Gastrocnemius medialis (tissue), 4 donors: ENCODE measurements at regions of chr7 and their contacts with region 1.

Region 1: GRCh38 chr7:50502001-50502684 is 52.0 kb upstream of the FIGNL1 start:
- DNase-seq: peak; percentile 91 to 97
- ATAC-seq: peak; percentile 83 to 88
- H3K4me3 ChIP-seq: peak overlapping the region in 1 of 4 donors; percentile 45
- H3K27ac ChIP-seq: peak overlapping the region; percentile 90 to 99 (median 97)
- H3K4me1 ChIP-seq: peaks cover 53 to 61% of the 10 kb centered on the region in 2 donors
- H3K27me3 ChIP-seq: no peaks in the 10 kb centered on the region
- CTCF ChIP-seq: peak in 1 of 5 experiments; percentile 4
- POLR2A ChIP-seq: peak in 1 of 2 donors; percentile 63

Region 2: DNA sequence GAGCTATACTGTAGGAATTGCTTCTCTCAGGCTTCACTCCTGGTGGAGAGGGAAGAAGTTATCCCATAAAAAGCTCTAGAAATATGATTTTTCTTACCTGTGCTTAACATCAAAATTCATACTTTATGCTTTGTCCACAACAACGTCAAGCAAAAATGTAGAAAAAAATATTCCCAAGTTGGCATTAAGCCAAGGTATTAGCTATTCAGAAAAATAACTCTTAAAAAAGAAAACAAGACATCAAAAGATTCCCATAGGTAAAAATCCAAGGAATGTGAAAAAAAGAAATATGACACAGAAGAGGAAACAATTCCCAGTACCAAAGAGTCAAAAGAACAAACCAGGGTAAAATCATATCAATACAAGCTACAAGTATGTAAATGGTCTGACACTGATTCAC is 1040.3 kb before region 1 on chr7:
- in situ Hi-C with region 1: no loop called
- intact Hi-C with region 1: no loop called
- DNase-seq: no peak
- ATAC-seq: no peak
- H3K4me3 ChIP-seq: no peak overlapping the region
- H3K27ac ChIP-seq: no peak overlapping the region
- H3K4me1 ChIP-seq: no peaks in the 10 kb centered on the region
- H3K27me3 ChIP-seq: no peaks in the 10 kb centered on the region
- CTCF ChIP-seq: no peak
- POLR2A ChIP-seq: no peak

Region 3: DNA sequence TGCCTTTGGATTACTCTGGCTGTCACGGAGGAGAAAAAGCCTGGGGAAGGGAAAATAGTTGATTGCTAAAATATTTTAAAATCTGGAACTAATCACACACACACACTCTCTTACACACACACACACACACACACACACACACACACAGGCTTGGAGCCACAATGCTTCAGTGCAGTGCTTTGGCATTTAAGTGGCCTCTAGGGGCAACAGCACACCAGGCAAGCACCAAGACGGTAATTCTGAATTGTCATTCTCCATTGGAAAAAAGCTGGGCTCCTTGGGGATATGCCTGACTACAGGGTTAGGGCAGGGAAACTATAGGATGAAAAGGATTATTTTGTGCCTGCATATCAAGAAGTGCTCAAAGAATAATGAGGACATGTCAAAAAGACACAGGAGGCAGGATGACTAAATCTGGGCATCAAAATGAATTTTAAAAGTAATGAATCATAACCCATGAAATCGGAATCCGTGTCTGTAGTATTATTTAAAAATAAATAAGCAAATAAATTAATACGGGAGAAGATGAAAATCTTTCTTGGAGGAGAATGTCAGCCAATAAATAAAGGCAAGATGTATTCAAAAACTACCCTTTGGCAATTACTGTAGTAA is 93.5 kb after region 1 on chr7:
- in situ Hi-C with region 1: no loop called
- intact Hi-C with region 1: loop called (anchors 5 kb)
- DNase-seq: peak in 1 of 2 donors; percentile 65
- ATAC-seq: peak; percentile 46 to 89
- H3K4me3 ChIP-seq: no peak overlapping the region
- H3K27ac ChIP-seq: peak overlapping the region in 3 of 4 donors; percentile 5 to 48 (median 31)
- H3K4me1 ChIP-seq: peaks cover 17 to 25% of the 10 kb centered on the region in 2 donors
- H3K27me3 ChIP-seq: no peaks in the 10 kb centered on the region
- CTCF ChIP-seq: peak; percentile 44 to 64 (median 49)
- POLR2A ChIP-seq: no peak

Region 4: DNA sequence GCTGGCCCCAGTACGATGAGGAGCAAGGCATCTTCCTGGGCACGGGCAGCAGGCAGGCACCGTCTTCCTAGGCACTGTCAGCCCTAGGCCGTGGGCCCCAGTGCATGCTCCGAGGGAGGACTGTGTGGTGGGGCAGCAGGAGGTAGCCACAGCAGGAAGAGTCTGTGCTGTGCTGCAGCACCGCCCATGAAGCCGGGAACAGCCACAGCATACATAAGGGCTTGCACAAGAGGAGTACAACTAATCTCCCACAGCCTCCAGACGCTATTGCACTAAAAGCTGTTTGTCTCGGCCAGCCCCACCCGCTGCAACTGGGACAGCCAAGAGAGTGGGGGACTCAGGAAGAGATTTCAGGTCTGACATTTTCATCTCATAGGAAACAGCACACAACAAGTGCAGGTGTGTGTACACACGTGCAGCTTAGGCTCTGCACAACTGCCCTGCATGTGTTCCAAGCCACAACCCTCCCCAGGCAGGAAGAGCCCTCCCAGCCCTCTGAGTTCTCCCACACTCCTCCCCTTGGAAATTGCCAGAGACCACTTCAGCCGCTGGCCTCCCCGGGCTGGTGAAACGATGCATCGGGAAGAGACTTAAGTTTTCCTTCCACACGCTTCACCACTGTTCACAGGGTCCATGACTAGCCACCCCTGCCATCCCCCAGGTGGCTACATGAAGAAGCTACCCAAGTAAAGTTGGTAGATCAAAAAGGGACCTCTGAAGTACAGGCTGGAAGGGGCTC is 151.2 kb after region 1 on chr7:
- in situ Hi-C with region 1: loop called in 1 of 4 experiments (anchors 10 kb)
- intact Hi-C with region 1: loop called (anchors 2 kb)
- DNase-seq: peak; percentile 85 to 91
- ATAC-seq: peak; percentile 35 to 48
- H3K4me3 ChIP-seq: peak overlapping the region; percentile 7 to 38 (median 26)
- H3K27ac ChIP-seq: peak overlapping the region; percentile 93 to 97 (median 94)
- H3K4me1 ChIP-seq: peaks cover 62 to 66% of the 10 kb centered on the region in 2 donors
- H3K27me3 ChIP-seq: no peaks in the 10 kb centered on the region
- CTCF ChIP-seq: peak in 1 of 5 experiments; percentile 21
- POLR2A ChIP-seq: peak; percentile 63 to 74

Region 5: GRCh38 chr7:50679218-50680007 is 177.3 kb after region 1 on chr7:
- in situ Hi-C with region 1: no loop called
- intact Hi-C with region 1: loop called (anchors 5 kb)
- DNase-seq: no peak
- ATAC-seq: peak; percentile 85 to 88
- H3K4me3 ChIP-seq: no peak overlapping the region
- H3K27ac ChIP-seq: peak overlapping the region; percentile 73 to 97 (median 84)
- H3K4me1 ChIP-seq: peaks cover 73 to 79% of the 10 kb centered on the region in 2 donors
- H3K27me3 ChIP-seq: no peaks in the 10 kb centered on the region
- CTCF ChIP-seq: peak; percentile 41 to 68 (median 48)
- POLR2A ChIP-seq: peak; percentile 16 to 44

Region 6: DNA sequence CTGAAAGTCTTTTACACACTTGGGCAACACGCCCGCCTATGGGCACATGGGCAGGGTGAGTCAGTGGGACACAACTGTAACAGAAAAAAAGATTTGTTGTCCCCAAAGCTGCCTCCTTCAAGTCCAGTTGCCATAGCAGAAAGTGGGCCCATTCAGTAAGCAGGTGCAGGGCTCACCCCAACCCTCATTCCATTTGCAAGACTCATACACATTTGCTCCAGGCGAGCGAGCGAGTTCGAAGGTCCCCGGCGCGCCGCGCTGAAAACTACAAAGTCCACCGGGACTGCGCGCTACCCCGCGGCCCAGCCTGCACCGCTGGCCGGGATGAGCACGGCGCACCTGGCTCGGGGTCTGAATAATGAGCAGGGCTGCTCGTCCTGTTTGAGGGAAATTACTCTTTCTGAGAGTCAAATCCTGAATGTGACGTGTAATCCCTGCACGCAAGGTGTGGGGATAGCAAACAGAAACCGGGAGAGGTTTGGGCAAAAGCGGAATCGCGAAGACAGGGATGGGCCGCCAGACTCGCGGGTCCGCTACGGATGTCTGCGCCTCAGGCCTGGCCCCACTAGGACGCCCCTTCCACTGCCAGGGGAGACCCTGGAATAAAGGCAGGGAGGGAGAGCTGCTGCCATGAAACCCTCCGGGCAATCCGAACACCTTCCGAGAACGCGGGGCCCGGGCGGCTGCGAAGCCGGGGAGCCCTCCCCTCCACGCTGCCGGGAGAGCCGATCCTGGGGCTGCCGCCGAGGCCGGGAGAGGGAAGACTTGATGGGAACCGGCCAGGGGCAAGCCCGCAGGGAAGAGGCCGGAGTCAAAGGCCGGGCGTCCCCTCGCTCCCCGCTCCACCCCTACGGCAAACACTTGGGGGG is 813.5 kb after region 1 on chr7:
- in situ Hi-C with region 1: no loop called
- intact Hi-C with region 1: loop called (anchors 10 kb)
- DNase-seq: peak; percentile 26 to 48
- ATAC-seq: peak; percentile 58 to 61
- H3K4me3 ChIP-seq: peak overlapping the region; percentile 76 to 91 (median 82)
- H3K27ac ChIP-seq: peak overlapping the region; percentile 81 to 95 (median 92)
- H3K4me1 ChIP-seq: peaks cover 16 to 19% of the 10 kb centered on the region in 2 donors
- H3K27me3 ChIP-seq: no peaks in the 10 kb centered on the region
- CTCF ChIP-seq: no peak
- POLR2A ChIP-seq: peak; percentile 26 to 49